PC-9 (cell line): ENCODE measurements at regions of chr3 and their contacts with region 1.

Region 1: DNA sequence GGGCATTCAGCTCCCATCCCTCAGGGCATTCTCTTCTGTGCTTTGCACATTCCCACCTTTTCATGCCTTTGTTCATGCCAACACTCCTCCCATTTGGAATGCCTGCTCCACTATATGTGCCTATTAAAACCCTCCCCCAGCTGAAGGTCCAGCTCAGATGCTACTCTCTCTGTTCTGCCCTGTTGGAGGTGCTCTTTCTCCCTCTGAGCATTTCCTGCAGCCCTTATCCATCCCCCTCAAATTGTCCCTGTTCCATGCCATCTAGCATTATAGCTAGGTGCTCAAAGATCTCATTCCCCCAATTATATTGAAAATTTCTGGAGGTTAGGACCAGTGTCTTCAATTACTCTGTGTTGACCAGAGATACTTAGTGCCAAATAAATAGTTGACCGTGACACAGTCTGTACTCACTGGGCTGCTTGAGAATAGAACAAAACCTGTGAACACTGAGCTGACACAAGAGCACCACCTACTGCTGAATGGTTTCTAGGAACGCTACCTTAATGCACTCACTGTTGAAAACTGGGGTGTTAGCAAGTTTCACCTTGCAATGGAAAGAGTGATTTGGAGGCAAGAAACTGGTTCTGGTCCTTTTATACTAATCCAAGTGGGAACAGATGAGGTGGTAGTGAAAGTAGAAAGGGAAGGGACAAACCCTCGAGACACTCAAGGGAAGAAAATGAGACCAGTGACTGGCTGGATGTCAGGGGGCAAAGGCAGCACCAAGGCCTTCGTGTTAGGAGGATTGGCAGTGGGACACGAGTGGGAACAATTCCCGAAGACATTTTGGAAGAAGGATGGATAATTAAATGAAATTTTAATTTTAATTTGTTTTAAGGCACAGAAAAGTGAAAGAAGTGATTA is 289.8 kb upstream of the ROPN1 start:
- DNase-seq: no peak
- H3K4me3 ChIP-seq: no peak overlapping the region
- H3K27ac ChIP-seq: no peak overlapping the region
- H3K4me1 ChIP-seq: no peaks in the 10 kb centered on the region
- H3K27me3 ChIP-seq: peaks cover 31% of the 10 kb centered on the region
- CTCF ChIP-seq: peak; percentile 47; the same call in 1 of the 2 replicates

Region 2: GRCh38 chr3:124078953-124079911 is 202.5 kb before region 1 on chr3:
- CTCF ChIA-PET with region 1: no interaction called
- POLR2A ChIA-PET with region 1: no interaction called
- intact Hi-C with region 1: loop called (anchors 1 kb)
- DNase-seq: peak in 1 of 2 experiments; percentile 9
- H3K4me3 ChIP-seq: no peak overlapping the region
- H3K27ac ChIP-seq: no peak overlapping the region
- H3K4me1 ChIP-seq: no peaks in the 10 kb centered on the region
- H3K27me3 ChIP-seq: peaks cover 69% of the 10 kb centered on the region
- CTCF ChIP-seq: peak; percentile 84

Region 3: GRCh38 chr3:124409789-124410261 is 128.1 kb after region 1 on chr3:
- CTCF ChIA-PET with region 1: no interaction called
- POLR2A ChIA-PET with region 1: no interaction called
- intact Hi-C with region 1: no loop called
- DNase-seq: no peak
- H3K4me3 ChIP-seq: no peak overlapping the region
- H3K27ac ChIP-seq: no peak overlapping the region
- H3K4me1 ChIP-seq: no peaks in the 10 kb centered on the region
- H3K27me3 ChIP-seq: peaks cover 52% of the 10 kb centered on the region
- CTCF ChIP-seq: no peak